Ascending aorta (tissue), 2 donors: ENCODE measurements at regions of chr2 and their contacts with region 1.

Region 1: GRCh38 chr2:67397143-67397986 is at the start of gene ETAA1:
- DNase-seq: peak; percentile 58 to 95
- H3K4me3 ChIP-seq: peak within 1 kb of the TSS; percentile 73 to 89
- H3K27ac ChIP-seq: peak within 1 kb of the TSS; percentile 90
- H3K4me1 ChIP-seq: peaks cover 0 to 28% of the 10 kb centered on the region in 2 donors
- H3K27me3 ChIP-seq: no peaks in the 10 kb centered on the region
- CTCF ChIP-seq: no peak
- total RNA-seq, gene ETAA1: 5.4 TPM

Region 2: DNA sequence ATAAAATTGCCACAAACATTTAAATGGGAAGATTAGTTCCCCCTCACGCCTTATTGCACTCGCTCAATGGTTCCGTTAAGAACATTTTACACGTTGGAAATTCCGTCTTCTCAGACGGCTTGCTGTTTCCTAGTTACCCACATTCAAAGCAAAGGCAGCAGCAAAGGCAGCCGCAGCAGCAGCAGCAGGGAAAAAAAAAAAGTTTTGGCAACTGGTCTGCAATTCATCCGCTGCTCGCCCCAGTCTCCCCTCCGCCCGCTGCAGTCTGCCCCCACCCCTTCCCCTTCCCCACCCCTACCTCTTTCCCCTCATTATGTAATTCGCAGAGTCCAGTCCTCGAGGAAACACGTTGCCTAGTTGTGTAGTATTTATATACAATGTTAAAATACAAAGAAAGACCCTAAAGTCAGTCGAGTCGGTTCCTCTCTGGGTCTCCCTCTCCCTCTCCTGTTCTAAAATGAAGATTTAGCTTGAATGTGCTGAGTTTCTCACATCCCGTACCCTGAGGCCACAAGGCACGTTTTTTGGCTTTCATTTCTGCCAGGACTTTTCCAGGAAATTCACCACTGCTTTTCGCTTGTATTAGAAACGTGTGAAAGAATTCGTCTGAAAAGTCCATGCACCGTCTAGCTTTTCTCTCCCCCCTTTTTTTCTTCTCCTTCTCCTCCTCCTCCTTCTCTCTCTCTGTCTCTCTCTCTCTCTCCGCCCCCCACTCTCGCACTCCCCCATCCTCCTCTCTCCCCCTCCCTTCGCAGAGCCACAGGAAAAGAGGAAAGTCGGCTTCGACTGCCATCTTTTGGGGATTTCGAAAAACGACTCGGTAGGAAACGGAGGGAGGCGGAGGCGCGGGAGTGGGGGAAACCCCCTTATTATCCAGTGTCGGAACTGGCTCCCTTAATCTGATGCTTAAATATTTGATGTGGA is 822.4 kb before region 1 on chr2:
- intact Hi-C with region 1: loop called (anchors 10 kb)
- DNase-seq: peak in 1 of 2 donors; percentile 83
- H3K4me3 ChIP-seq: peak overlapping the region; percentile 82 to 86
- H3K27ac ChIP-seq: peak overlapping the region; percentile 72 to 77
- H3K4me1 ChIP-seq: peaks cover 15 to 23% of the 10 kb centered on the region in 2 donors
- H3K27me3 ChIP-seq: peaks cover 21% of the 10 kb centered on the region
- CTCF ChIP-seq: peak; percentile 49 to 70 (median 60)

Region 3: DNA sequence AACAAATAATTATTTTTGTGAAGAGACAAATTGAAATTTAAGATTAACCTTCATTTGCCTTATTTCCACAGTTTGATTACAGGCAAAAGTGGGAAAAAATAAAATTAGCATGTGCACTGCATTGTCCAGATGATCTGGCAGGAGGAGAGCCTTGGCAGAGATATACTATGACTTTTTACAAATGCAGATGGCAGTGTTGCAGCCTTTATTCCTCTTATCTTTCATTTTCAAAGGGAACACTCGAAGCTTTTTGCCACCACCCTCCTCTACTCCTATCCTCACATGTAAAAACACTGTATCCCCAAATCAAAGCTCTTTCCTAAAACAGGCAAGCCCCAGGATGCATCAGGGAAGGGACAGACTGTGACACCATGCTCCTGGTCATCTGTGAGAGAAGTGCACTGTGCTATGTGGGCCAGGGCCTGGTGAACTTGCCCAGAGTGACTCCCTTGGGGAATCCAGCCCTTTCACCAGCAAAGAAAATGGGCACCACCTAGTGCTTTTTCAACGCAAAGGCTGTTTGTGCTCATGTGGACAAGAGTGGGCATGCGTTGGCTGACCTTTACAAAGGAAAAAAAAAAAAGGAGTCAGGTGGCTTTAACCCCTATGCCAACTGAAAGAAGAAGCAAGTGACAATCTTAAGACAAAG is 74.9 kb before region 1 on chr2:
- intact Hi-C with region 1: loop called (anchors 10 kb)
- DNase-seq: peak in 1 of 2 donors; percentile 77
- H3K4me3 ChIP-seq: peak overlapping the region in 1 of 2 donors; percentile 11
- H3K27ac ChIP-seq: peak overlapping the region; percentile 25 to 44
- H3K4me1 ChIP-seq: peaks cover 0 to 10% of the 10 kb centered on the region in 2 donors
- H3K27me3 ChIP-seq: no peaks in the 10 kb centered on the region
- CTCF ChIP-seq: peak; percentile 40 to 70 (median 61)

Region 4: DNA sequence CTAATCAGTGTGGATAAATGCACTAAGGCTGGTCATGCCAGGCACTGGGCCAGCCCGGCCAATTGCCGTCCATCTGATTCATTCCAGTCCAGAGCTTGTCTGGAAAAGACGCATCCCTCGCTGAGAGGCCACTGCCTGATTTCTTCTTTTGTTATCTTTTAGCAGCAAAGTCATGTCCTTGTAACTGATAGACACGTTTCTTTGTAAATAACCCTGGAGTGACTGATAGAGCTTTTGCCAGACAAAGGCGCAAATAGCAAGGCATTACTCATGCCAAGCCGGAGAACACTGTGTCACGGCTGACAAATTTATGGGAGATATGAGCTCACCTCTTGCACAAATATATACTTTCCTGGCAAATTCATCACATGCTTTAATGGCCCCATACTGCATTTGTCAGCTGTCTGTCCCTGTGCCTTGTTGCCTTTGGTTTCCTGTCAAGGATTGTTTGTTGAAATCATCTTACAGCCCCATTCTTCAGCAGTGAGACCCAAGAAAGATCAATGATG is 164.1 kb after region 1 on chr2:
- intact Hi-C with region 1: no loop called
- DNase-seq: peak in 1 of 2 donors; percentile 68
- H3K4me3 ChIP-seq: no peak overlapping the region
- H3K27ac ChIP-seq: no peak overlapping the region
- H3K4me1 ChIP-seq: peaks cover 0 to 8% of the 10 kb centered on the region in 2 donors
- H3K27me3 ChIP-seq: no peaks in the 10 kb centered on the region
- CTCF ChIP-seq: no peak

Region 5: DNA sequence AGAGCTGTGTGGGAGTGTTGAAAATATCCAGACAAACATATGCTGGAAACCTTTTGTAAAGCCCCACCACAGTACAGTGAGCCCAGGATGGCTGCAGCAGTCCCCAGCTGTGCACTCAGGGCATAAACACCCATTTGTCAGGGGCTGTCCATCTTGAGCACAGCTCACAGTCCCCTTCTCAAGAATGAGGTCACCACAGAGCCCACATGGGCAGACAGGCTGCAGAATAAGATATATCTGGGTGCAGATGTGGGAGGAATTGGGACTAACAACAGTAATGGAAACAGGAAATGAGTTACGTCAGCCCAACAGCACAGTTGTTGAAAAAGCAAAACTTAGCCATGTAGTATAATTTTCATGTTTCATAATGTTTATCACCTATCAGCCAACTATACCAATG is 219.4 kb after region 1 on chr2:
- intact Hi-C with region 1: no loop called
- DNase-seq: no peak
- H3K4me3 ChIP-seq: no peak overlapping the region
- H3K27ac ChIP-seq: no peak overlapping the region
- H3K4me1 ChIP-seq: no peaks in the 10 kb centered on the region
- H3K27me3 ChIP-seq: no peaks in the 10 kb centered on the region
- CTCF ChIP-seq: no peak

Region 6: GRCh38 chr2:67666386-67667053 is 269.2 kb after region 1 on chr2:
- intact Hi-C with region 1: loop called (anchors 10 kb)
- DNase-seq: peak in 1 of 2 donors; percentile 76
- H3K4me3 ChIP-seq: no peak overlapping the region
- H3K27ac ChIP-seq: peak overlapping the region; percentile 73 to 78
- H3K4me1 ChIP-seq: peaks cover 0 to 23% of the 10 kb centered on the region in 2 donors
- H3K27me3 ChIP-seq: no peaks in the 10 kb centered on the region
- CTCF ChIP-seq: no peak

Region 7: GRCh38 chr2:67917332-67918054 is 520.1 kb after region 1 on chr2:
- intact Hi-C with region 1: loop called (anchors 10 kb)
- DNase-seq: no peak
- H3K4me3 ChIP-seq: no peak overlapping the region
- H3K27ac ChIP-seq: peak overlapping the region; percentile 82 to 91
- H3K4me1 ChIP-seq: peaks cover 0 to 23% of the 10 kb centered on the region in 2 donors
- H3K27me3 ChIP-seq: no peaks in the 10 kb centered on the region
- CTCF ChIP-seq: no peak

Region 8: GRCh38 chr2:68251187-68251854 is 854.0 kb after region 1 on chr2:
- intact Hi-C with region 1: loop called (anchors 10 kb)
- DNase-seq: peak in 1 of 2 donors; percentile 80
- H3K4me3 ChIP-seq: peak overlapping the region; percentile 91 to 99
- H3K27ac ChIP-seq: peak overlapping the region; percentile 97 to 100
- H3K4me1 ChIP-seq: peaks cover 3 to 44% of the 10 kb centered on the region in 2 donors
- H3K27me3 ChIP-seq: no peaks in the 10 kb centered on the region
- CTCF ChIP-seq: peak; percentile 32 to 76 (median 66)